Left ventricle myocardium superior (tissue), 1 donor: ENCODE measurements at regions of chr16 and their contacts with region 1.

Region 1: GRCh38 chr16:106623-107324 is 28.7 kb downstream of the MPG start:
- DNase-seq: no peak
- ATAC-seq: peak; percentile 23

Region 2: GRCh38 chr16:65671-66137 is 41.1 kb before region 1 on chr16:
- intact Hi-C with region 1: no loop called
- DNase-seq: peak; percentile 92
- ATAC-seq: peak; percentile 66

Region 3: DNA sequence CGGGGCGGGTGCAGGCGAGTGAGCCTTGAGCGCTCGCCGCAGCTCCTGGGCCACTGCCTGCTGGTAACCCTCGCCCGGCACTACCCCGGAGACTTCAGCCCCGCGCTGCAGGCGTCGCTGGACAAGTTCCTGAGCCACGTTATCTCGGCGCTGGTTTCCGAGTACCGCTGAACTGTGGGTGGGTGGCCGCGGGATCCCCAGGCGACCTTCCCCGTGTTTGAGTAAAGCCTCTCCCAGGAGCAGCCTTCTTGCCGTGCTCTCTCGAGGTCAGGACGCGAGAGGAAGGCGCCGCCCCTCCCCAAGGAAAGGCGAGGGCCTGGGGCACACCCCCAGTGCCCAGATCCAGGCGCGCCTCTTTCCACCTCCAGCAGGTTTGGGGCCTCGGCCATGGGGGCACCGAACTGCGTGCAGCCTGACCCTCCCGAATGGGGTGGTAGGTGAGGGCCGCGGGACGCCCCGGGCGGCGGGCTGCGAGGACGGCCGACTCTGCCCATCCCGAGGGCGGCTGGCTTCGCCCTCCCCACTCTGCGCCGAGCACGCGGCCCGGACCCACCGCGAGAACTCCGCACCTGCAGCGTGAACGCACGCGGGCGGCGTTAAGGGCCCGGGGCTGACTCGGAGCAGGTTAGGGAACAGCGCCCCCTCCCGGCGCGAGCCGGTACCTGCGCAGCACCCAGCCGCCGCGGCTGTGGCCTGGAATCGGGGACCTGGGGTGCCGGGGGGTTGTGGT is 74.3 kb after region 1 on chr16:
- intact Hi-C with region 1: loop called (anchors 5 kb)
- DNase-seq: peak; percentile 85
- ATAC-seq: peak; percentile 81